Posterior vena cava (tissue), 2 donors: ENCODE measurements at regions of chr6 and their contacts with region 1.

Region 1: DNA sequence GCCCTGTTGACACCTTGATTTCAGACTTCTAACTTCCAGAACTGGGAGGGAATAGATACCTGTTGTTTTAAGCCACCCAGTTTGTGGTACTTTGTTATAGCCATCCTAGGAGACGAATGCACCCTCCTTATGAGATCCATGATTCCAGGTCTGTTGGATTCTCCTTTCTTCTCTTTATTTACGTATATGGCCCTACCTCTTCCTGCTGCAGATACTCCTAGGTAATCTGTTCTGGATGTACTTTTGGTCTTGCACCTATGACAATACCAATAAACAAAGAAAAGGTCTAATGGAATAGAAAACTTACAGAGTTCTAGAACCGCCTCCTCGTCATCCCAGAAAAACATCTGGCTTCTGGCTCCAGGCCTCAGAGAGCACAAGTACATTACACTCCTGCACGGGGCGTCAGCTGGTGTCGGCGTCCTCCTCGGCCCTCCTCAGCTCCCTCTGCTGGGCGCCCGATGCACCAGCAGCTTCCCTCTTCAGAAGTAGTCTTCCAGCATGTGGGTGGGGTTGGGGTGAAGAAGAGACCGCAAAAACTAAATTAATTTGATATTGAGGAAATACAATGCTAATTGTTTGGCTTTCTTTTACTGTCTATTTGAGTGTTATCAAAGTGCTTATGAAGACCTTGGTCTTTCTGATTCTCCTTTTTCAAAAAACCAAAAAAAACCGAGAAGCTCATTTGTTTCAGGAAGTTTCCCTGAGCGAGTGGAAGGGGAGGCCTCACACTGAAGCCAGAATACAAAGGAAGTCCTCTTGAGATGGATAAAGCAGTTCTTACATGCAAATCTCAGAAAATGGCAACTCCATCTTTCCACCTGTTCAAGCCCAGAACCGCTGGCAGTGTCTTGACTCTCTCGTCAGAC is 9.7 kb upstream of the ATXN1 start:
- DNase-seq: peak; percentile 93

Region 2: GRCh38 chr6:16819752-16820151 is 48.8 kb after region 1 on chr6:
- intact Hi-C with region 1: no loop called
- DNase-seq: no peak

Region 3: DNA sequence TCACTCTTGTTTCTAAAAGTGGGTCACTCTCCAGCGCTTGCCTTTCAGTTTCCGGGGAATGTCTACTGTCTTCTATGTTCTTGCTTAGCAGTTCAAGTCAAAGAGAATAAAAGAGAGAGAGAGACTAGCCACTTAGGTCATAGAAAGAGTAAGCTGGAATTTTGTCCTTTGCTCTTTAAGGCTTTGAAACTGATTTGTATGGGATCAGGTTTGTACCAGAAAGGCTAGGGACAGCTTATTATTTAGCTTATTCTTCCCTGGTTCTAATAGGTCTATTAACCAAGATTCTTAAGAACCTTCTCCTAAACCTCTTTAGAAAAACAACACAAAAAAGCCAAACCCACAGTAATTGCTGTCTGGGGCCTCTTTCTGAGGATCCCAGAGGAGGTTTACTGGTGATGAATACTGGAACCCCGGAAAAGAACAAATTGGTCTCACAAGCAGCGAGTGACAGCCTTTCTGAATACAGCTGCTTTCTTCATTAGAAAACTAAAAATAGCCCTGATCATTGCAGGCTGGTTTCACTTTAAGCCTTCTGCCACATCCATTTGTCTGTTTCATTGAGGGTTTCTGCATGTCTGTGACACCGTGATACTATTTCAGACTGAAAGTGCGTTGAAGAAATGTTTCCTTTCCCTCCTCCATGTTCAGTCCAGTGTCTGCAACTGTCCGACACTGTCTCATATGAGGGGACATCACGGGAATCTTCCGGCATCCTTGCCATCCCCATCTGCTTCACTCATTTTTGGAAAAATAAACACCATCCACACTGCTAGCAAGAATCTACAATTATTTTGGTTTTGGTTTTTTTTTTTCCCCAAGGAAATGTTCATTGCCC is 65.4 kb after region 1 on chr6:
- intact Hi-C with region 1: no loop called
- DNase-seq: no peak

Region 4: GRCh38 chr6:16921399-16922110 is 150.6 kb after region 1 on chr6:
- intact Hi-C with region 1: no loop called
- DNase-seq: no peak

Region 5: DNA sequence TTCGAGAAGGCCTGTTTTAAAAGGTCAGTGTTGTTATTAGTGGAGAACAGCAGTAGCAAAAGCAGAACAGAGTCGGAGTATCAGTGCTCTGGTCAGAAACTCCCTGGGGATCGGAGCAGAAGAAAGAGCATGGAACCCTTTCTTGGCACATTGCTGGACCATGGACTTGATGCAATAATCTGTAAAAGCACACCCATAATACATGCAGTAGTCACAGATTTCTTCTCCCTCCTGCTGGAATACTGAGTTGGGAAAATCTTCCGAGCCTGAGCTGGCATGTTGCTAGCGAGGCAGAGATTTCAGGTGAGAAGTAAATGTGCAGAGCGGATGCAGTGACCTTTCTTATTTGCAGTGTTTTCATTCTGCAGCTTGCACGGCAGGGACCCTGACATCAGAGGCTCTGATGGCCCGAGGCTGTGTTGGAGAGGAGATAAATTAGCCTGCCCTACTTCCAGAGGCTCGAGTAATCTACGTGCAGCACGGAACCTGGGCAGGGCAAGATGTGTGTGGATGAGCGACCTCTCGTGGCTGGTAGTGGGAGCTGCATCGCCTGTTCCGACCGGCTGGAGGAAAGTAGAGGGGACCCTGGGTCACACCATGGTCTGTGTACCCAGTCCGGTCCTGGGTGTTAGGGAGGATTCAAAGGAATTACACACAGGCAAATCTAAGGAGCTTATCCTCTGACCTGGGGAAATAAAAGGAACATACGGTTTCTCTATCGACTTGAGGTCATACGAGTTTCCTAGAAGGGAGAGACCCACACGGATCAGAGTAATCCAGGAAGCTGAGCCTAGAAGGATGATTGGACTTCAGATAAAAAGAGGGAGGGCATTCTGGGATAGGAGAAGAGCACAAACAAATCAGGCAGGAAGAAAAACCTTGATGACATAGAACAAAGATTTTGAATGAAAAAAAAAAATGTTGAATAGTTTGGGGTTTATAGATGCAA is 193.9 kb after region 1 on chr6:
- intact Hi-C with region 1: loop called (anchors 10 kb)
- DNase-seq: peak; percentile 85